Ovary (tissue), 10 donors: ENCODE measurements at regions of chr6 and their contacts with region 1.

Region 1: GRCh38 chr6:109079981-109080380 is 14.7 kb downstream of the SESN1 start:
- DNase-seq: peak in 4 of 5 donors; percentile 51 to 81 (median 62)
- H3K4me3 ChIP-seq: no peak overlapping the region
- H3K27ac ChIP-seq: peak overlapping the region in 1 of 2 donors; percentile 2
- H3K4me1 ChIP-seq: peaks cover 4% of the 10 kb centered on the region
- H3K27me3 ChIP-seq: no peaks in the 10 kb centered on the region
- CTCF ChIP-seq: no peak
- EP300 ChIP-seq: no peak
- POLR2A ChIP-seq: no peak

Region 2: DNA sequence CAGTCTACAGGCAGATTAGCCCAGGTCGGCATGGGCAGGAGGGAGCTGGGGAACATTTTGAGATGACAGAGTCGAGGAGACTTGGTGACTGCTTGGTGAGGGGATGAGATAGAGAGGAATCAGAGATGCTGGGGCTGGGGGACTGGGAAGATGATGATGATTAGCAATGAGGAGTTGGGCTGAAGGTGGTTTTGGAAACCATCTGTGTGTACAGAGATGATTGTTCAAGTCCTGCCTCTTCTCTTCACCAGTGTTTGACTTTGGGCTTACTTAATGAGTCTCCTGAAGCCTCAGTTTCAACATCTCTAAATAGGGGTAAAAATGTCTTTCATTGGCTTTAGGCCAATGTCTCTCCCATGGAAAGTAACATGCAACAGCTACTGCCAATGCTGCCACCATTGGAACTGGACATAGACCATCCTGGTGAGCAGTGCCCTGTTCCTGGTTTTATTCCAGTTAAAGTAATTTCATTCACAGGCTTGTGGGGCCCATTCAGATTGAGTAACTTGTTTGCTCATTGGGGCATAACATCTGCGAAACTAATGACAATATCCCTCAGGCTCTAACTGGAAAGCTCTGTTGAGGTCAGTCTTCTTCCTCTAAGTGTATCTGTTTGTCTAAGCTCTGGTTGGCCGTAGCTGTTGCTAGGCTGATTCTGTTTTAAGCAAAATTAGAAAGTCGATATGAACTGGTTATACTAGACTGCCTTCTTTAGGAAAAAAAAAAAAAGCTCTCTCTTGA is 132.7 kb before region 1 on chr6:
- intact Hi-C with region 1: loop called in 1 of 4 experiments (anchors 5 kb)
- DNase-seq: peak in 1 of 5 donors; percentile 61
- H3K4me3 ChIP-seq: no peak overlapping the region
- H3K27ac ChIP-seq: peak overlapping the region; percentile 85 to 95
- H3K4me1 ChIP-seq: peaks cover 23% of the 10 kb centered on the region
- H3K27me3 ChIP-seq: no peaks in the 10 kb centered on the region
- CTCF ChIP-seq: no peak
- EP300 ChIP-seq: no peak
- POLR2A ChIP-seq: no peak